Esophagus muscularis mucosa (tissue), 4 donors: ENCODE measurements at regions of chr16 and their contacts with region 1.

Region 1: DNA sequence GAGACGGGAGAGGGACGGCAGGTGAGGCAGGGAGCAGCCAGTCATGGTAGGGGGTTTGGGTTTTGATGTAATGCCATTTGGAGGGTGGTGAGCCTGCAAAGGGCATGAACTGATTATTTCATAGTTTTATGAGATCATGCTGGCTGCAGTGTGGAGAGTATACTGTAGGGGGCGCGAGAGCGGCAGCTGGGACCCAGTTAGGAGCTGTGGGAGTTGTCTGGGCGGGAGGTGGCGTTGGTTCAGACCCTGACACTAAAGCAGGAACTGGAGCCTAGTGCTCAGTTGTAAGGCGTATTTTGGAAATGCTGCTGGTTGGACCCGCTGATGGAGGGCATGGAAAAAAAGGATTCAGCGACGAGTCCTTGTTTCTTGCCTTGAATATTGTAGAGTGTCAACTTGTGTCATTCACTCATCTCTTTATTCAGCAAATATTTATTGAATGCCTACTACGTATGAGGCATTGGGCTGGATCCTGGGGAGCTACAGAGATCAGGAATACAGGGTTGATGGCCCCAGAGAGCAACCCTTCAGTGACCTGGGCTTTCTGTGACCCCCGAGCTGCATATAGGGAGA is 23.7 kb upstream of the KDM8 start:
- DNase-seq: peak; percentile 94
- H3K4me3 ChIP-seq: no peak overlapping the region
- H3K27ac ChIP-seq: no peak overlapping the region
- H3K4me1 ChIP-seq: peaks cover 0 to 11% (median 8%) of the 10 kb centered on the region in 4 donors
- H3K27me3 ChIP-seq: peaks cover 0 to 3% (median 0%) of the 10 kb centered on the region in 4 donors
- CTCF ChIP-seq: peak; percentile 95 to 98 (median 95)
- EP300 ChIP-seq: no peak
- POLR2A ChIP-seq: no peak

Region 2: DNA sequence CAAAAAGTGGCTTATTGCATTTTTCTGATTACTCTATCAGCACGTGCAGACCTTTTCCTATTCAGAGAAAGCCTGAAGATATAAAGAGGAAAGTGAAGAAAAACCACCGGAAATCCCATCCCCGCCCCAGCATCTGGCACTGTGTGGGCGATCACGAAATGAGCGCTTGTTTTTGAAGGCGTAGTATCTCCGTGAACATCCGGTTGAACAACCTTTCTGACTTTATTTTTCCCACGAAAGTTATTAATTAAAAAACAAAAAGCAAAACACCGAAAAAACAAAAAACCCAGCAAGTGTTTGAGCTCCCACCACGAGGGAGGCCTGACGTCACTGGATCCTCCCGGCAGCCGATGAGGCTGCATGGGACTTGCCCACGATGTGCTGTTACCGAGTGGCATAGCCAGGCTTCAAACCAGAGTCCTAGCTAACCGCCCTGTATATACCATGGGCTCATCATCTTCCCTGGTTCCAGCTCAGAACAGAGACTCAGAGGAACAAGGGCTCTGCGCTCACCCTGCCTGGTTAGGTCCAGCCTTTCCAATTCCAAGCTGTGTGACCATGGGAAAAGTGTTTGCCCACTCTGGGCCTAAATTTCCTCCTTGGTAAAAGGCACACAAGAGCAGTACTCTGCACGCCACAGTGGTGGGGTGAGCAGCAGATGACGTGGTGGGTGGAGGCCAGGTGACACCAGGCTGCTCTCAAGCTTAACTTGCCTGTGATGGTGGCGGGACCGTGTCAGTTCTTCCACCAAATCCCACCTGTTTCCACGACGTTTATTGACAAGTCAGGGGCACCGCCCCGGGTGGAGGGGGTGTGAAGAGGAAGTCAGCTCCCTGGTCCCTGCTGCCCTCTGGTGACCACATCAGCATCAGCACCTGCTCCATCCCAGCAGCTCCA is 188.1 kb after region 1 on chr16:
- intact Hi-C with region 1: loop called (anchors 1 kb)
- DNase-seq: peak; percentile 96
- H3K4me3 ChIP-seq: peak overlapping the region; percentile 19 to 51 (median 34)
- H3K27ac ChIP-seq: peak overlapping the region; percentile 52 to 65 (median 58)
- H3K4me1 ChIP-seq: peaks cover 12 to 45% (median 34%) of the 10 kb centered on the region in 4 donors
- H3K27me3 ChIP-seq: no peaks in the 10 kb centered on the region
- CTCF ChIP-seq: peak; percentile 84 to 92 (median 85)
- EP300 ChIP-seq: no peak
- POLR2A ChIP-seq: no peak

Region 3: DNA sequence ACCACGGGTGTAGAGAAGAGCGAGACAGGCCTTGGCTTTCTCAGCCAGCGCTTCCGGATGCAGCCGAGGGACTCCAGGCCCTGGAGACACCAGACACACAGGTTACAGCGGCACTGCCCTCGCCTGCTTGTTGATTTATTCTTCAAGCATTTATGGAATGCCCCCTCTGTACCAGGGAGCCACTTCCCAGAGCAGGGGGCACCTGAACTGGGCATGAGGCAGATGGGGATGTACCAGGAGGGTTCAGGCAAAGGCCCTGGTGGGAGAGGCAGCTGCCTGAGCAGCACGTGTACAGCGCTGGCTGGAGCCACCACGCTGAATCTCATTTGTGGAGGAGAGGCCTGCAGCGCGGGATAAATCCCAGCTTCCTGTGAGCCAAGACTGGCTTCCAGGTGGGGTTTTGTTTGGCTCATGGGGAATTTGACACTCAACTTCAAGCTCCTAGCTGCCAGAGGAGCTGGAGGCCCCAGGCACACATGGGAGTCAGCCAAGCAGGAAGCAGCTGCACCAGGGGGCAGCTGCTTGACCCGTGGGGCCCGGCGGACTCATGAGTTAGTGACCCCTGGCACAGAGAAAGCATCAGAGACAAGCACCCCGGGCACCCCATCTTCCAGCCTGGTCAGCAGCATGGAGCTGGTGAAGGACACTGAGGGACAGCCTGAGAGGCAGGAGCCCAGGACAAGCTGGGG is 282.0 kb after region 1 on chr16:
- intact Hi-C with region 1: loop called (anchors 1 kb)
- DNase-seq: no peak
- H3K4me3 ChIP-seq: no peak overlapping the region
- H3K27ac ChIP-seq: peak overlapping the region in 2 of 4 donors; percentile 39 to 52
- H3K4me1 ChIP-seq: peaks cover 16 to 33% (median 30%) of the 10 kb centered on the region in 4 donors
- H3K27me3 ChIP-seq: no peaks in the 10 kb centered on the region
- CTCF ChIP-seq: no peak
- EP300 ChIP-seq: no peak
- POLR2A ChIP-seq: no peak